Left colon (tissue), 2 donors: ENCODE measurements at regions of chr1 and their contacts with region 1.

Region 1: GRCh38 chr1:211323156-211324063 is 3.2 kb upstream of the TRAF5 start:
- DNase-seq: peak in 1 of 2 donors; percentile 72
- ATAC-seq: peak; percentile 64

Region 2: GRCh38 chr1:211092955-211093354 is 230.5 kb before region 1 on chr1:
- intact Hi-C with region 1: no loop called
- DNase-seq: no peak
- ATAC-seq: no peak

Region 3: DNA sequence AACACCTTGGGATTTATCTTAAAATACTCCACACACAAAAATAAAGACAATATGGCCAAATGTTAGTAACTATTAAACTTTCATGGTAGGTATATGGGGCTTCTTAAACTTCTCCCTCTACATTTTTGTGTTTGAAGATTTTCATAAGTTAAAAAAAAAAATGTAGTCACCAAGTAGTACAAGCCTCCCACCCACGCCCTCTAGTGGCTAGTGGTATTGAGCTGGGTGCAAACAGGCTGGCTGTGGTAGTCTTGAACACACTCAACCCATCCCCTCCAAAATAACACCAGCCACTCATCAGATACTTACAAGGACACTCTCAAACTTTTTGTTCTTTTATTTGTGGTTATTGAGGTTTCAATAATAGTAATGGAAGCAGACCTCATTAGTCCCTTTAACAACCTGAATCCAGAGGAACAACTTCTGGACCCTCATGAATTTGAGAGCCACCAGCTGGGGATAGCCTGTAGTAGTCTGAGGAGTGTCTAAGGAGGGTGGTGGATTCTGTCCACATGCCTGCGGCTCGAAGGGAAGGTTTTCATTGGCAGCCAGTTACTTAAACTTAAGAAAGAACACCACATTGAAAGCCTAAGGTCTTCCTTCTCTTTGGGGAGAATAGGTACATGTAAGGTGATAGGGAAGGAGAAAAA is 152.9 kb after region 1 on chr1:
- intact Hi-C with region 1: loop called in 1 of 2 experiments (anchors 10 kb)
- DNase-seq: peak; percentile 58 to 83
- ATAC-seq: peak; percentile 71

Region 4: GRCh38 chr1:211514030-211514754 is 190.8 kb after region 1 on chr1:
- intact Hi-C with region 1: loop called in 1 of 2 experiments (anchors 10 kb)
- DNase-seq: peak; percentile 87 to 88
- ATAC-seq: peak; percentile 50

Region 5: GRCh38 chr1:211578640-211579433 is 255.4 kb after region 1 on chr1 and contains the start of gene SLC30A1:
- intact Hi-C with region 1: no loop called
- DNase-seq: peak; percentile 100
- ATAC-seq: peak; percentile 84
- total RNA-seq, gene SLC30A1: 16.6 to 33.1 TPM